ENCODE measurements at regions of chr2 and their contacts with region 1.

Region 1: DNA sequence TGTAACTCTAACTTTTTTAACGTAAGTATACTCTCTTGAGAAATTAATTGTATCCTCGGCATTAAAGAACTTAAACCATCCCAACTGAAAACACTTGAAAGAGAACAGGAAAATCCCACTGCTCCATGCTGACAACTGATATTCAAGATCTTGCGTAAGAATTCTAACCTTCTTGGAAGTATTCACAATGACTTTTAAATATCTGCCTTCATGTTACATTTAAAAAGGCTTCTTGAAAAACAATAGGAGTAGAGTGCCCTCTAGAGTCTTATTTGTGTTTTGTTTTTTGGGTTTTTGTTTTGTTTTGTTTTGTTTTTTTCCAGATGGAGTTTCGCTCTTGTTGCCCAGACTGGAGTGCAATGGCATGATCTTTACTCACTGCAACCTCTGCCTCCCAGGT is 65.4 kb upstream of the DNAJC10 start:
- DNase-seq: no peak
- H3K4me3 ChIP-seq: no peak overlapping the region
- H3K27ac ChIP-seq: no peak overlapping the region
- H3K4me1 ChIP-seq: no peaks in the 10 kb centered on the region
- H3K27me3 ChIP-seq: no peaks in the 10 kb centered on the region
- CTCF ChIP-seq: peak; percentile 50 to 71 (median 58)
- POLR2A ChIP-seq: no peak

Region 2: GRCh38 chr2:181962142-181962541 is 688.6 kb before region 1 on chr2:
- intact Hi-C with region 1: loop called (anchors 10 kb)
- DNase-seq: no peak
- H3K4me3 ChIP-seq: no peak overlapping the region
- H3K27ac ChIP-seq: no peak overlapping the region
- H3K4me1 ChIP-seq: no peaks in the 10 kb centered on the region
- H3K27me3 ChIP-seq: no peaks in the 10 kb centered on the region
- CTCF ChIP-seq: no peak
- POLR2A ChIP-seq: no peak

Region 3: DNA sequence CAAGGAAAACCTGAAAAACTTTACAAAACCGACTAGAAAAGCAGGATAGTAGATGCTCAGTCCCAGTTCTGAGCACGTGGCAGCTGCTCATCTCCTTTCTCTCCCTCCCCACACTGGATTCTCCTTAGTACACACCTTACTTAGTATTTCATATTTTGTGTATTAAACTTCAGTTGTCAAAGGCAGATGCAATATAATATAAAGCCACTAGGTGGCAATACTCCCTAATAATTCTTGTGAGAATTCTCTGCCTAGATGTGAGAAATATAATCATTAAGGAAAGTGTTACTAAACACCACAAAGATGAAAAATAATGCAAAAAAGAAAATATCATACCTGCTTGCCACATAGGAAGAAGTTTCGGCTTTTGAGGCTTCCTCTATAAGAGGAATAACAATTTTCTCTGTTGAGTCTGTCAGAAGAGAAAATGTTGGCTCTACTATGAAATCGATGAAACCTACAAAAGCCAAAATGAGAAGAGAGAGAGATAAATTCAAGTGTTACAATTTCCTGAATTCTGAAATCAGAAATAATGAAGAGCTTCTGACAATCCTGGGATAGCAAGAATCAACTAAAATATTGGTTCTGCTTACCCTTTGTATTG is 464.5 kb before region 1 on chr2:
- intact Hi-C with region 1: loop called (anchors 5 kb)
- DNase-seq: no peak
- H3K4me3 ChIP-seq: no peak overlapping the region
- H3K27ac ChIP-seq: no peak overlapping the region
- H3K4me1 ChIP-seq: no peaks in the 10 kb centered on the region
- H3K27me3 ChIP-seq: no peaks in the 10 kb centered on the region
- CTCF ChIP-seq: peak; percentile 70 to 80 (median 74)
- POLR2A ChIP-seq: no peak

Measured in uterus (tissue), 4 donors.